Left lung (tissue), 14 donors: ENCODE measurements at regions of chr5 and their contacts with region 1.

Region 1: GRCh38 chr5:91706785-91707520 is 323.8 kb upstream of the ARRDC3 start:
- DNase-seq: no peak
- ATAC-seq: no peak
- H3K4me3 ChIP-seq: no peak overlapping the region
- H3K27ac ChIP-seq: no peak overlapping the region
- H3K4me1 ChIP-seq: no peaks in the 10 kb centered on the region
- H3K27me3 ChIP-seq: no peaks in the 10 kb centered on the region
- CTCF ChIP-seq: no peak

Region 2: DNA sequence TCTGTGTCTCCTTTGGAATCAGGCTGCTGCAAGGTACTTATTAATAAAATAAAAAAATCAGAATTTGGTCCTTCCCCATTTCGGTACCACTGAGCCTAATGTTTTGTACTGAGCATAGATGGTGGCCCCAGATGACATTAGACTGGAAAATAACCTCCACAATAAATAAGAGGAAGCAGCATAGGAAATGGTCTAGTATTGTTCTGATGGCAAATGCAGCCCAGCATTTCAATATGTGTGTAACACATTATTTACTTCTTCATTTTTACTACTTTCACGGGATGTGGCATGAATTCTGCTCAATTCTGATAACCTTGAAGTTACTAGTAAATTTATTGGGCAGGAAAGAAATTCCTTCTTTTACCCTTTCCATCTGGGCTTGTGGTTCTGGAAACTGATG is 852.8 kb before region 1 on chr5:
- intact Hi-C with region 1: loop called in 1 of 2 experiments (anchors 10 kb)
- DNase-seq: no peak
- ATAC-seq: no peak
- H3K4me3 ChIP-seq: no peak overlapping the region
- H3K27ac ChIP-seq: no peak overlapping the region
- H3K4me1 ChIP-seq: no peaks in the 10 kb centered on the region
- H3K27me3 ChIP-seq: no peaks in the 10 kb centered on the region
- CTCF ChIP-seq: no peak

Region 3: DNA sequence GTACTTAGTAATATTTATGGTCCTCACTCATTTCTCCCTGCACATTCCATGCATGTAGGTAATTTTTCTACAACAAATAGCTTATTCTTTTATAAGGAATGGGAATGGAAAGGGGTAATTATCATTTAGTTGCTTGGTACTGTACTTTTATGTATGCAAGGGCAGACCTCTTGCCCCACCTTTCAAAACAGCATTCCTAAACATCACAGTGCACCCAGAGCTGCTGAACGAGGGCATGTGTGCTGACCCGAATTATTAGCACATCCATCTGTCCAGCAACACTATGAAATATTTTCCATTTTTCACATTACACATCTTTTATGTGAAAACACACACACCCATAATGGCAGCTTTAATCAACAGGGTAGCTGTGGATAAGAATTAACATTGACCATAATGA is 95.2 kb before region 1 on chr5:
- intact Hi-C with region 1: no loop called
- DNase-seq: no peak
- ATAC-seq: no peak
- H3K4me3 ChIP-seq: no peak overlapping the region
- H3K27ac ChIP-seq: no peak overlapping the region
- H3K4me1 ChIP-seq: no peaks in the 10 kb centered on the region
- H3K27me3 ChIP-seq: no peaks in the 10 kb centered on the region
- CTCF ChIP-seq: no peak